ENCODE measurements at regions of chr3 and their contacts with region 1.

Region 1: GRCh38 chr3:160885791-160886286 is 129.8 kb downstream of the PPM1L start:
- DNase-seq: peak; percentile 97 to 100
- ATAC-seq: peak; percentile 94 to 96
- H3K4me3 ChIP-seq: peak overlapping the region in 2 of 4 donors; percentile 3 to 42
- H3K27ac ChIP-seq: peak overlapping the region; percentile 82 to 91 (median 84)
- H3K4me1 ChIP-seq: peaks cover 47 to 51% of the 10 kb centered on the region in 2 donors
- H3K27me3 ChIP-seq: no peaks in the 10 kb centered on the region
- CTCF ChIP-seq: peak; percentile 23 to 57 (median 41)
- POLR2A ChIP-seq: no peak

Region 2: DNA sequence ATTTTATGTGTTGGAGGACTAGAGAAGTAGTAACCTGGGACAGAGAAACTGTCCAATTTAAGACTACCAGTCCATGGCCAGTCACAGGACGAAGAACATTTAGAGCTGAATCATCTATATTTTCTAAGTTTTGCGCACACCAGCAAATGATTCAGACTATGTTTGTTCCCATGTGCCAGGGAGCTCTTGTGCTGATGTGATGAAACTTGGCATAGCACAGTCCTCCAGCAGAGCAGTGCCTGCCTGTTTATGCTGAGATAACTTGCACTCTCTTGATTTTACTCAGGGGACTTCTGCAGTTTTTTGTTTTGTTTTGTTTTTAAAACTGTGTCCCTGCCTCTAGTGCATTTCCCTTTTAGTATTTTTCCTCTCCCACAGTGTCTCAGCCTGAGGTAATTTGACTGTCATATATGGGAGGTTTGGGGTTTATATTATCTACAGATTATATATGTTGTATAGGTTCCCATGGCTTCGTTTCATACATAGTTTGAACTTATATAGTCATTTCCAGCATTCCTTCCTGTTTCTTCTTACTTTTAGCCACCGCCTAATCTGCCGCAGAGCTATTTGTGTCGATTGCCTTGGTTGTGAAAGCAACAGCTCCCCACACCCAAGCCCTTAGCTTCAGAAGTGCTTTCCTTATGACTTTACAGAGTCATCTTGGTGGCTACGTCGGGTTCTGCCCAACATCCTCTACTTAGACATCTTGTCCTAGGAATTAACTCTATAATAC is 84.3 kb before region 1 on chr3:
- in situ Hi-C with region 1: loop called in 1 of 4 experiments (anchors 5 kb)
- intact Hi-C with region 1: no loop called
- DNase-seq: peak; percentile 83 to 85
- ATAC-seq: peak; percentile 83 to 84
- H3K4me3 ChIP-seq: peak overlapping the region; percentile 27 to 53 (median 39)
- H3K27ac ChIP-seq: peak overlapping the region; percentile 91 to 94 (median 92)
- H3K4me1 ChIP-seq: peaks cover 89 to 92% of the 10 kb centered on the region in 2 donors
- H3K27me3 ChIP-seq: no peaks in the 10 kb centered on the region
- CTCF ChIP-seq: no peak
- POLR2A ChIP-seq: peak; percentile 34 to 63

Region 3: GRCh38 chr3:160869818-160870217 is 16.0 kb before region 1 on chr3:
- in situ Hi-C with region 1: no loop called
- intact Hi-C with region 1: loop called (anchors 2 kb)
- DNase-seq: peak; percentile 92 to 93
- ATAC-seq: peak; percentile 94 to 95
- H3K4me3 ChIP-seq: peak overlapping the region; percentile 41 to 50 (median 46)
- H3K27ac ChIP-seq: peak overlapping the region; percentile 89 to 92 (median 91)
- H3K4me1 ChIP-seq: peaks cover 76 to 77% of the 10 kb centered on the region in 2 donors
- H3K27me3 ChIP-seq: no peaks in the 10 kb centered on the region
- CTCF ChIP-seq: no peak
- POLR2A ChIP-seq: peak in 1 of 2 donors; percentile 11

Region 4: DNA sequence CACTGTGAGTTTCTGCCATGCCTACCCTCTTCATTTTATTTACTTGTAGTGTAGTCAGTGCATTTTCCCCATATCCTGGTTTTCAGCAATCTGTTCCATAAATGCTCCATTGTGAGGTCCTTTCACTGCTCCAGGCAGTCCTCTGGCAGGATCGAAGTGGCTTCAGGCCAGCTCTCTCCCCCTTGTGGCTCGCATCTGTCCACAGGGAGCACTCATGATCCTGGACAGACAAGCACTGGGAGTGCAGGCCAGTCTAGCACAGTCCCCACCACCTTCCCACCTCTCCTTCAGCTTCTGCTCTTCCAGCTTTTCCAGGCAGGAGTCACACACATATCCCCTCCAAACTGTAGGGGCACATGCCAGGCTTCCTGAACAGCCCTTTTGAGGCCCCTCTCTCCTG is 43.8 kb after region 1 on chr3:
- in situ Hi-C with region 1: no loop called
- intact Hi-C with region 1: loop called (anchors 5 kb)
- DNase-seq: peak; percentile 32 to 43
- ATAC-seq: peak; percentile 59 to 68
- H3K4me3 ChIP-seq: no peak overlapping the region
- H3K27ac ChIP-seq: no peak overlapping the region
- H3K4me1 ChIP-seq: peaks cover 17 to 50% of the 10 kb centered on the region in 2 donors
- H3K27me3 ChIP-seq: no peaks in the 10 kb centered on the region
- CTCF ChIP-seq: peak in 4 of 5 experiments; percentile 20 to 48 (median 36)
- POLR2A ChIP-seq: no peak

Region 5: DNA sequence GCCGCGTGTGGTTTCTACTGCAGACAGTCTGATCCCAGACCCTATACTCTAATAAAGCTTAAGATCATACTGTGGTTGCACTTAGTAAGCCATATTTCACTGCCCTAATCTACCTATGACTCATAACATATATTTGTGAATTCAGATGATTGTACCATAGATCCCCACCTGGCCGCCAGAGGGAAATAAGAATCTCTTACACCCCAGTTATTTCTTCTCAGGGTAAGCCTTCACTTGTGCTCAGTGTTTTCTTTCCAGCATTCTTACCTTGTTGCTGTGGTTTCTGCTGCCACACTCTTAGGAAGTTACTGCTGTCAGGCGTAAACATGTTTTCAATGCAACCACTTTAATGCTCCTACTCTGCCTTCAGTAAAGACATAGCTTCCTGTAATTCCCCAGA is 113.4 kb after region 1 on chr3:
- in situ Hi-C with region 1: no loop called
- intact Hi-C with region 1: no loop called
- DNase-seq: no peak
- ATAC-seq: no peak
- H3K4me3 ChIP-seq: no peak overlapping the region
- H3K27ac ChIP-seq: no peak overlapping the region
- H3K4me1 ChIP-seq: no peaks in the 10 kb centered on the region
- H3K27me3 ChIP-seq: no peaks in the 10 kb centered on the region
- CTCF ChIP-seq: no peak
- POLR2A ChIP-seq: no peak

Region 6: GRCh38 chr3:161548301-161548700 is 662.5 kb after region 1 on chr3:
- in situ Hi-C with region 1: no loop called
- intact Hi-C with region 1: no loop called
- DNase-seq: no peak
- ATAC-seq: no peak
- H3K4me3 ChIP-seq: no peak overlapping the region
- H3K27ac ChIP-seq: no peak overlapping the region
- H3K4me1 ChIP-seq: no peaks in the 10 kb centered on the region
- H3K27me3 ChIP-seq: no peaks in the 10 kb centered on the region
- CTCF ChIP-seq: no peak
- POLR2A ChIP-seq: no peak

Measured in gastrocnemius medialis (tissue), 4 donors.